Activated CD4-positive, alpha-beta T cell treated with anti-CD3 and anti-CD28 coated beads, Interleukin-2, amount 10 ng/mL, durations not matched to agents 7 days and 5 days (primary cell): ENCODE measurements at regions of chr6 and their contacts with region 1.

Region 1: GRCh38 chr6:125956506-125957390 is at the start of gene HINT3:
- DNase-seq: peak; percentile 98
- H3K4me3 Mint-ChIP-seq: no peak within 1 kb of the TSS
- H3K27ac Mint-ChIP-seq: no peak within 1 kb of the TSS
- H3K4me1 Mint-ChIP-seq: peaks cover 7% of the 10 kb centered on the region
- H3K27me3 Mint-ChIP-seq: peaks cover 3% of the 10 kb centered on the region
- total RNA-seq, gene HINT3: 7.5 to 8.3 TPM

Region 2: DNA sequence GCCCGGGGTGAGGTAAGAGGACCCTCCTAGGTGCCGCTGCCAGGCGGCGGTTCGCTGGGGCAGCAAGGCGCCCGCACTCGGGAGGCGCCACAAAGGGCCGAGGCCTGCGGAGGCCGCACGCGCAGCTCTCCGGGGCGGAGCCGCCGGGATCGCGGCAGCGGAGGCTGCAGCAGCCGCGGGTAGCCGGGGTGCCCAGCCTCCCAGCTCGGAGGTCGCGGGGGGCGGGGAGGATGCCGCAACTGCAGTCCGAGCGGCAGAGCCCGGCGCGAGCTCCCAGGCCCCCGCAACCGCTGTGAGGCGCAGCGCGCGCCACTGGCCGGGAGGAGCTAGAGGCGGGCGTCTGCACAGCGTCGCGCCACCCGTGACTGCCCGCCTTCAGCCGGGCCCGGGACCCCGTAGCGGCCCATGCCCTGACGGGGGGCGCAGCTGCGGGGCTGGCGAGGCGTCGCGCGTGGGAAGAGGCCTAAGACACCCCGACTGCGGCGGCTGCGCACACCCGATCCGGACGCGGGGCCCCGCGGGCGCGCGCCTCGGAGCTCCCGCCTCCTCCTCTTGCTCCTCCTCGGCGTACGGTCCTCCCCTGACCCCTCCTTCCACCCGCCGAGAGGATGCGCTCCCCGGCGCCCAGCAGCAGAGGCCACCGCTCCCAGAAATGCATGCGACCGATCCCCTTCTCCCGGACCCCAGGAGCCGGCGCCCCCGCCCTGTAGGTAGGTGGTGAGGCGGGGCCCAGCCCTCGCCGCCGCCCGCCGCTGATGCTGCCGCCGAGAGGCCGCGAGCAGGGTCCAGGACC is 166.2 kb before region 1 on chr6 and contains the start of gene NCOA7:
- CTCF ChIA-PET with region 1: interaction called, 50 read pairs
- POLR2A ChIA-PET with region 1: interaction called, 7 read pairs
- DNase-seq: peak; percentile 82
- H3K4me3 Mint-ChIP-seq: peak within 1 kb of the TSS; percentile 90
- H3K27ac Mint-ChIP-seq: peak within 1 kb of the TSS; percentile 100
- H3K4me1 Mint-ChIP-seq: peaks cover 51% of the 10 kb centered on the region
- H3K27me3 Mint-ChIP-seq: no peaks in the 10 kb centered on the region
- total RNA-seq, gene NCOA7: 43.2 to 53.1 TPM

Region 3: GRCh38 chr6:125888989-125889656 is 67.6 kb before region 1 on chr6:
- CTCF ChIA-PET with region 1: interaction called, 18 read pairs
- POLR2A ChIA-PET with region 1: no interaction called
- DNase-seq: peak; percentile 22
- H3K4me3 Mint-ChIP-seq: no peak overlapping the region
- H3K27ac Mint-ChIP-seq: no peak overlapping the region
- H3K4me1 Mint-ChIP-seq: no peaks in the 10 kb centered on the region
- H3K27me3 Mint-ChIP-seq: no peaks in the 10 kb centered on the region

Region 4: GRCh38 chr6:125918681-125919566 is 37.8 kb before region 1 on chr6:
- CTCF ChIA-PET with region 1: interaction called, 33 read pairs
- POLR2A ChIA-PET with region 1: no interaction called
- DNase-seq: peak; percentile 70
- H3K4me3 Mint-ChIP-seq: peak overlapping the region; percentile 84
- H3K27ac Mint-ChIP-seq: peak overlapping the region; percentile 95
- H3K4me1 Mint-ChIP-seq: peaks cover 56% of the 10 kb centered on the region
- H3K27me3 Mint-ChIP-seq: no peaks in the 10 kb centered on the region

Region 5: GRCh38 chr6:125944434-125944816 is 12.3 kb before region 1 on chr6:
- CTCF ChIA-PET with region 1: interaction called, 18 read pairs
- POLR2A ChIA-PET with region 1: no interaction called
- DNase-seq: no peak
- H3K4me3 Mint-ChIP-seq: no peak overlapping the region
- H3K27ac Mint-ChIP-seq: no peak overlapping the region
- H3K4me1 Mint-ChIP-seq: peaks cover 9% of the 10 kb centered on the region
- H3K27me3 Mint-ChIP-seq: peaks cover 18% of the 10 kb centered on the region

Region 6: DNA sequence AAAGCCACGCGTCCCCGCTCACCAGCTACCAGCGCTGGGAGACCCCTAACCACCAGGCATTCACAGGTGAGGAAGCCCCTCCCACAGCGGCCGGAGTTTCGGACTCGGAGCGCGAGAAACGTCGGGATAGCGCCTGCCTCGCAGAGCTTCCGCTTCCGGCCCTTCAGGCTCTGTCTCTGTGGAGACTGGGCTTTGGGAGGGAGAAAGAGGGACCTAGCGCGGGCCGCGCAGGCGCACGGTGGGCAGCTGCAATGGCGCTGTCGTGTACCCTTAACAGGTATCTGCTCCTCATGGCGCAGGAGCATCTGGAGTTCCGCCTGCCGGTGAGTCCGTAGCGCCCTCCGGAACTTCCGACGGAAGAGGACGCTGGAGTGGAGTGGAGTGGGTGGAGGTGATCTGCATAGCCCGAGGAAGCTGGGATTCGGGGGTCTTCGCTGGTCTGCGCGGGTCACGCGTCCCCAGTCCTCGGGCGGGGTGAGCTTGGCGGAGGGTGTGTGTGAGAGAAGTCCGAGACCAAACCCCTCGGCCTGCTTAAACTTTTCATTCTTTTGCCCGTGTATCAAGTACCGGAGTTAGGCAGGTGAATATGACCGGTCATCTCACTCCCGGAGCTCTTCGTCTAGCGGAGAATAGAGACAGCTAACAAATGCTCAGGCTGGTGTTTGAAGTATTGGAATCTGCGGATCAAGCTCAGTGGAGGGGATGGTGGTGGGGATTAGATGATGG is 29.7 kb after region 1 on chr6 and contains the start of gene TRMT11:
- CTCF ChIA-PET with region 1: interaction called, 13 read pairs
- POLR2A ChIA-PET with region 1: no interaction called
- DNase-seq: peak; percentile 80
- H3K4me3 Mint-ChIP-seq: no peak within 1 kb of the TSS
- H3K27ac Mint-ChIP-seq: no peak within 1 kb of the TSS
- H3K4me1 Mint-ChIP-seq: peaks cover 15% of the 10 kb centered on the region
- H3K27me3 Mint-ChIP-seq: no peaks in the 10 kb centered on the region
- total RNA-seq, gene TRMT11: 15.1 to 16.3 TPM